ENCODE measurements at regions of chr14 and their contacts with region 1.

Region 1: DNA sequence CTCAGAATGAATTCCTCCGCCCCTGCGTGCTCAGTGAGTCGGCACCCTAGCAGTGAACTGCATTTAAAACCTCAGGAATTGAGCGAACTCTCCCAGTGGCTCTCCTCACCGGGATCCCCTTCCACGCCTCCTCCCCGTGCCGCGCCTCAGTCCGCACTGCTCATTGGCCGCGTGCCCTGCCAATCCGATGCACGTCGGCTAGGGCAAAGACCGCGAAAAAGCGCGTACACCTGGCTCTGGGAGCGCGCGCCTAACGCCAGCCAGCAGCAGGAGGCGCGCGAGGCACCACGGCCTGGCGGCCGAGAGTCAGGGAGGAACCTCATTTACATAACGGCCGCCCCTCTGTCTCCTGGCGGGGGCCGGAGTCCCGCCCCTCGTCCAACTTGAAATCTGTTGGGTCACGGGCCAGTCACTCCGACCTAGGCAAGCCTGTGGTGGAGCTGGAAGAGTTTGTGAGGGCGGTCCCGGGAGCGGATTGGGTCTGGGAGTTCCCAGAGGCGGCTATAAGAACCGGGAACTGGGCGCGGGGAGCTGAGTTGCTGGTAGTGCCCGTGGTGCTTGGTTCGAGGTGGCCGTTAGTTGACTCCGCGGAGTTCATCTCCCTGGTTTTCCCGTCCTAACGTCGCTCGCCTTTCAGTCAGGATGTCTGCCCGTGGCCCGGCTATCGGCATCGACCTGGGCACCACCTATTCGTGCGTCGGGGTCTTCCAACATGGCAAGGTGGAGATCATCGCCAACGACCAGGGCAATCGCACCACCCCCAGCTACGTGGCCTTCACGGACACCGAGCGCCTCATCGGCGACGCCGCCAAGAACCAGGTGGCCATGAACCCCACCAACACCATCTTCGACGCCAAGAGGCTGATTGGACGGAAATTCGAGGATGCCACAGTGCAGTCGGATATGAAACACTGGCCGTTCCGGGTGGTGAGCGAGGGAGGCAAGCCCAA is at the start of gene HSPA2:
- DNase-seq: peak; percentile 98
- H3K4me3 Mint-ChIP-seq: peak within 1 kb of the TSS; percentile 86
- H3K27ac Mint-ChIP-seq: peak within 1 kb of the TSS; percentile 93
- H3K4me1 Mint-ChIP-seq: peaks cover 20% of the 10 kb centered on the region
- H3K27me3 Mint-ChIP-seq: peaks cover 46% of the 10 kb centered on the region
- total RNA-seq, gene HSPA2: 8.1 TPM in 2 replicates

Region 2: DNA sequence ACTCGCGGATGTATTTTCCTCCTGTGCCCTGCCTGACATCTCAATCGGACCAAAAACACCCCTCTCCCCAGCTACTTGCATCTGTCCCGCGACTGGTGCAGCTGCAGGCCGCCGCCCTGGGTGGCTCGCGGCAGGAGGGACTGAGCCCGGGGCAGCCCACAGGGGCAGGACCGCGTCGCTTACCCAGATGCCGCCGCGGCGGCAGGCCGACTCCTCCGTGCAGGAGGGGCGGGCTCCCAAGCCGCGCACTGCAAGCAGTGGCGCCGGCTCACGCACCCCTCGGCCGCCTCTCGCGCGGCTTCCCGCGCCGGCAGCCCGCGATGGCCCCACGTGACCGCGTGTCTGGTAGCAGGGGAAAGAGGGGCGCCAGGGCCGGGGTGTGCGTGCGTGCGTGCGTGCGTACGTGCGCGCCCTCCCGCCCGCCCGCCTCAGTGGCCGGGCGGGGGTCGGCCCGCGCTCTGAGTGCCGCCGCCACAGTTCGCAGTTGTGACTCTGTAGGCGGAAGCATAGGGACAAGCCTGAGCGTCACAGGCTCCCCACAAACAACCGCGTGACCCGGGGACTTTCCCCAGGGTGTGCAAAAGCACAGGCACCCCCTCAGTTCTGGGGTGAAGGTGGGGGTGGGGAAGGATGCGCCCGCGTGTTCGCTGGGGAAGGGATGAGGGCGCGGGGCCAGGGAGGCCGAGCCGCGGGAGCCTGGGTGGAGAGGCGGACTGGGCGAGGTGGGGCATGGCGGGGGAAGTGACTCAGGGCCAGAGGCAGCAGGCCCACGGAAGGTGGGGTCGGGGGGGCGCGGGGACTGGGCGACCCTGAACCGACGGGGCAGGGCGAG is 36.8 kb before region 1 on chr14 and contains the start of gene ZBTB25:
- intact Hi-C with region 1: loop called (anchors 1 kb)
- DNase-seq: peak; percentile 99
- H3K4me3 Mint-ChIP-seq: peak within 1 kb of the TSS; percentile 94
- H3K27ac Mint-ChIP-seq: peak within 1 kb of the TSS; percentile 100
- H3K4me1 Mint-ChIP-seq: peaks cover 56% of the 10 kb centered on the region
- H3K27me3 Mint-ChIP-seq: peaks cover 1% of the 10 kb centered on the region
- total RNA-seq, gene ZBTB25: 21.8 and 22.2 TPM in 2 replicates

Region 3: GRCh38 chr14:64636208-64636979 is 95.9 kb after region 1 on chr14:
- intact Hi-C with region 1: loop called (anchors 2 kb)
- DNase-seq: peak; percentile 91
- H3K4me3 Mint-ChIP-seq: no peak overlapping the region
- H3K27ac Mint-ChIP-seq: no peak overlapping the region
- H3K4me1 Mint-ChIP-seq: peaks cover 4% of the 10 kb centered on the region
- H3K27me3 Mint-ChIP-seq: peaks cover 12% of the 10 kb centered on the region

Region 4: DNA sequence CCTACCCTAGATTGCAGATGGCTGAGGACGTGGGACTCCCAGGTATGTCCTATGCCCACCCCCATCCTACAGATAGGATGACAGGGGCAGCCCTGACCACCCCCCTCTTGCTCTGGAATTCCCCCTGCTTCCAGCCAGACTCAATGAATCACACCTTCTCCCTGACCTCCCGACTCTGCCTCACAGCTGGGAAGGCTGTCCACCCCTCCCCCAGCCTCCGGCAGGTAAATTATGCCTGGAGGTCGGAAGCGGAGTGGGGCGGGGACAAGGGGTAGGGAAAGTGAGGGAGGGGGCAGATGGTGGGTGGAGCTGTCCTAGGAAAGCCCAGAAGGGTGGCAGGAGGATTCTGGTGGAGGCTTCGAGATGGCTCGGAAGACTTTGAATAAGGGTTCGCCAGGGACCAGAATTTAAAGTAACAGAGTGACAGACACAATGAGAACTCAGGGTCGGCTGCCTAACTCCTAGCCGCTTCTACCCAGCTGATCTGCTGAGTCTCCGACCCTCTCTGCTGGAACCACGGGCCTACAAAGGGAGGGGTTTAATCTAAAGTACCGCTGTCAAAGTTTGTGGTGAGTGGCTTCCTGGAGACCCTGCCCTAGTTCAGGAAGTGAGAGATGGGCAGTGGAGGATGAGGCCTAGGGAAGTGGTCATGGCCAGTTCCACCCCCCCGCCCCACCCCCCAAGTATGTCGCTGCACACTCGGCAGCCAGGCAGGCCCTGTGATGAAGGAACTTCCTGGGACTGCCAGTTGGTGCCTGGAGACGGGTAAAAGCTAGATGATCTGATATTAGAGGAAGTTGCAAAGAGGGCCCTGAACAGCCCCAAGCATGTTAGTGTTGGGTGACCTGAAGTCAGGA is 167.9 kb after region 1 on chr14:
- intact Hi-C with region 1: loop called (anchors 5 kb)
- DNase-seq: peak; percentile 89
- H3K4me3 Mint-ChIP-seq: peak overlapping the region; percentile 72
- H3K27ac Mint-ChIP-seq: peak overlapping the region; percentile 38
- H3K4me1 Mint-ChIP-seq: peaks cover 46% of the 10 kb centered on the region
- H3K27me3 Mint-ChIP-seq: peaks cover 43% of the 10 kb centered on the region

Region 5: DNA sequence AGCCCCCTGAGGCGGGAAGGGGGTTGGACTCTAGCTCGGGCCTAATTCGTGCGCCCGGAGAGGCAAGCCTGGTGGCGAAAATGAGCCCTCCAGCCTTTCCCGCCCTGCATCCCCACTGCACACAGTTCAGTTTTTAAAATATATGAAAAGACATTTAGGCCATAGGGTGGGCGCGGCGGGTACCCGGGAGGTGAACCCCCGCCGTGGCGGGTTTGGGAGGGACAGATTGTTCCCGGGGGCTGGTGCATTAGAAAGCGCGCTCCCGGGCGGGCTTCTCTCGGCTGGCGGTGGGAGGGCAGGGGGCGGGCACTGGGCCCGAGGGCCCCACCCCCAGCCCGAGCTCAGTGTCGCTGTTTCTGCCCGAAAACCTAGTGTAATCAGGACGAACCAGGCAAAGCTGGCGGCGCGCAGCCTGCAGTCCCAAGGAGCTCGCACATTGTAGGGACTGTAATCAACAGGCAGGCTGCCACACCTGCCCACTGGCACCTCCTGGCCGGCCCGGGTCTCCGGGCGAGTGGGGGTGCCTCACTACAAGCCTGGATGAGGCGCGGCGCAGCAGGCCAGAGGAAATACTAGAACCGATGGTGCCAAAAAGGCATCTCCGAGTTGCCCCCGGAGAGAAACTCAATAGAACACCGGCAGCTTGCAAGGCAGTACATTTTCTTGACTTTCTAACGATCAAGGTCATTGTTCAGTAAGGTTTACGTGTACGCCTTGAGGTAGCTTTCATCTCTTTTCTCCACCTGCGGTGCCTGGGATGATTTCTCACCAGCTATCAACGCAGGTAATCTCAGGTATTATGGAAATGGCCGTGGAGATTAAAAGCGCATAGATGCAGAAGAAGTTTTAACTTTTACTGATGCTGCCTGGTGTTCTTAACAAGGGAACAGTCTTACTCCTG is 340.0 kb after region 1 on chr14:
- intact Hi-C with region 1: loop called (anchors 5 kb)
- DNase-seq: peak; percentile 89
- H3K4me3 Mint-ChIP-seq: peak overlapping the region; percentile 85
- H3K27ac Mint-ChIP-seq: no peak overlapping the region
- H3K4me1 Mint-ChIP-seq: peaks cover 12% of the 10 kb centered on the region
- H3K27me3 Mint-ChIP-seq: peaks cover 74% of the 10 kb centered on the region

Measured in activated CD4-positive, alpha-beta T cell treated with anti-CD3 and anti-CD28 coated beads, Interleukin-2, amount 10 ng/mL, durations not matched to agents 24 days and 14 days (primary cell).